ENCODE measurements at regions of chr1 and their contacts with region 1.

Region 1: GRCh38 chr1:169914531-169914930 is 20.8 kb upstream of the SCYL3 start:
- DNase-seq: no peak
- H3K4me3 ChIP-seq: no peak overlapping the region
- H3K27ac ChIP-seq: peak overlapping the region in 1 of 4 donors; percentile 36
- H3K4me1 ChIP-seq: peaks cover 0 to 6% (median 0%) of the 10 kb centered on the region in 4 donors
- H3K27me3 ChIP-seq: no peaks in the 10 kb centered on the region
- CTCF ChIP-seq: no peak
- EP300 ChIP-seq: no peak
- POLR2A ChIP-seq: no peak

Region 2: GRCh38 chr1:170531758-170532657 is 617.5 kb after region 1 on chr1 and contains the start of gene GORAB:
- in situ Hi-C with region 1: loop called in 1 of 4 experiments (anchors 25 kb)
- intact Hi-C with region 1: no loop called
- DNase-seq: peak; percentile 92
- H3K4me3 ChIP-seq: peak within 1 kb of the TSS; percentile 51 to 91 (median 67)
- H3K27ac ChIP-seq: peak within 1 kb of the TSS; percentile 93 to 98 (median 94)
- H3K4me1 ChIP-seq: peaks cover 3 to 45% (median 20%) of the 10 kb centered on the region in 4 donors
- H3K27me3 ChIP-seq: no peaks in the 10 kb centered on the region
- CTCF ChIP-seq: no peak
- EP300 ChIP-seq: no peak
- POLR2A ChIP-seq: peak; percentile 87
- total RNA-seq, gene GORAB: 8.2 to 83.0 (median 29.9) TPM

Region 3: DNA sequence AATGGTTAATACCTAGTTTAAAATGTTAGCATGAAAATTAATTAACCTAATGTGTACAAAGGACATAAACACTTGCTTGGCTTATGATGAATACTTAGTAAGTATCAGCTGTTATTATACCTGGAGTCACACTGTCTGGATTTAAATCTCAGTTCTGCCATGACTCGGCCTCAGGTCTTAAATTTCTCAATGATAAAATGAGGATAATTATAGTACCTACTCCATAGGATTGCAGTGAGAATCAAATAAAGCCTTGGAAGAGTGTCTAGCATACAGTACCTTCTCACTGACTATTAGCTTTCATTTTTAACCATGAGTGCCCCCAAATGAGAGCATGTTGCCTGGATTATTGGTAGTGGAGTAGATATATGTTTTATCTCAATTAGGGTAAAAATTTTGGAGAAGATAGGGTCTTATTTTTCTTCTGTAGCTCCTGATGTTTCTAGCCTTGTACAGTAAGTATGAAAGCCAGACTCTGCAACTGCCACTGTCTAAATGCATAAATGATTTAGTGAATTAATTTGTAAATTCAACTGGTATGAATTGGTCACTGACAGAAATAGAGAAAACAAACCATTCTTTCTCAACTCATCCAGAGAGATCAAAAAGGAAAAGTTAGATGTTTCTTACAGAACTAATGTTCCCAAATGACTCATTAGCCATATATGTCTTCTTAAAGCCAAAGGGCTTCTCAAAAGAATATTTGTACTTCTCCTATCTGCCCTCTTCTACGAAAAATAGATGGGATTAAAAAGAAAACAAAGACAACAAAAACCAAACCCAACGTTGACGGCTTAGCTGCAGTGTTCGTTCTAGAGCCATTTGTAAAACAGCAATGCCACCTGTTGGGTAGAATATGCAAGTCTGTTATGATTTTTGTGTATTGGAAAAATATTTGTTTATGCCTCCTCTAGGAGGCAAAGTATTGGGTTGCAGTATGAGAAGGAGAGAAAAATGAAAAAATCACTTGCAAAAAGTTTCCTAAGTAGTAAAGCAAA is 967.0 kb after region 1 on chr1:
- in situ Hi-C with region 1: loop called in 1 of 4 experiments (anchors 25 kb)
- intact Hi-C with region 1: no loop called
- DNase-seq: no peak
- H3K4me3 ChIP-seq: peak overlapping the region in 1 of 4 donors; percentile 31
- H3K27ac ChIP-seq: peak overlapping the region in 1 of 4 donors; percentile 31
- H3K4me1 ChIP-seq: peaks cover 0 to 46% (median 13%) of the 10 kb centered on the region in 4 donors
- H3K27me3 ChIP-seq: no peaks in the 10 kb centered on the region
- CTCF ChIP-seq: peak; percentile 33 to 67 (median 45)
- EP300 ChIP-seq: no peak
- POLR2A ChIP-seq: no peak

Measured in transverse colon (tissue), 4 donors.